Dendritic cell treated with granulocyte-macrophage colony-stimulating factor and Interleukin-4, amounts not matched to agents 40 ng/mL and 50 ng/mL, for 4 days (primary cell): ENCODE measurements at regions of chr3 and their contacts with region 1.

Region 1: GRCh38 chr3:10758304-10759061 is 57.5 kb upstream of the SLC6A11 start:
- H3K4me3 Mint-ChIP-seq: no peak overlapping the region
- H3K27ac Mint-ChIP-seq: no peak overlapping the region
- H3K4me1 Mint-ChIP-seq: no peaks in the 10 kb centered on the region
- H3K27me3 Mint-ChIP-seq: peaks cover 23% of the 10 kb centered on the region

Region 2: GRCh38 chr3:10883478-10884234 is 125.2 kb after region 1 on chr3:
- intact Hi-C with region 1: loop called (anchors 1 kb)
- H3K4me3 Mint-ChIP-seq: no peak overlapping the region
- H3K27ac Mint-ChIP-seq: no peak overlapping the region
- H3K4me1 Mint-ChIP-seq: peaks cover 10% of the 10 kb centered on the region
- H3K27me3 Mint-ChIP-seq: peaks cover 14% of the 10 kb centered on the region

Region 3: DNA sequence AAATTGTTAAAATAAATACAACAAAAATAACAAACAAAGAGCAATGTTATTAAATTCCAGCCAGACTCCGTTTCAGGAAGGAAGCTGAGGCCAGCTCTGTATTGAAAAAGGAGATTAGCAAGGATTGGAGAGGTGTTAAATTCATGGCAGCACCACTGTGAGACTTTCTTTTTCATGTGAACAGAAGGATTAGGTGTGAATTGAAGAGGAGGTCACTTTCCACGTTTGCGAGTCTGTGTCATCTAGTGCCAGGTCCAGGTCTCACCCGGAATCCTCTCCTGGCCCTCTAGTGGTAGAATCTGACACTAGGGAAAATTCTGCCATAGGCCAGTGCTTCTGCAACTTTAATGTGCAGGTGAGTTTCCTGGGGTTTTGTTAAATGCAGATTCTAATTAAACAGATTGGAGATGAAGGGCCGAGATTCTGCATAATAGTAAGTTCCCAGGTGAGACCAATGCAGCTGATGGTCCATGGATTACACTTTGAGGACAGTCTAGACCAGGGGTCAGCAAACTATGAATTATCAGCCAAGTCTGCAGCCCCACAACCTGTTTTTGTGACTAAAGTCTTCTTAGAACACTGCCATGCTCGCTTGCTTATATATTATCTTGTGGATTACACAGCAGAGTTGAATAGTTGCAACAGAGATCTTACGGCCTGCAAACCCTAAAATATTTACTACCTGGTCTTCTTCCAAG is 224.9 kb after region 1 on chr3:
- intact Hi-C with region 1: loop called (anchors 10 kb)
- H3K4me3 Mint-ChIP-seq: no peak overlapping the region
- H3K27ac Mint-ChIP-seq: no peak overlapping the region
- H3K4me1 Mint-ChIP-seq: no peaks in the 10 kb centered on the region
- H3K27me3 Mint-ChIP-seq: peaks cover 28% of the 10 kb centered on the region

Region 4: GRCh38 chr3:11335056-11335608 is 576.6 kb after region 1 on chr3:
- intact Hi-C with region 1: loop called (anchors 10 kb)
- H3K4me3 Mint-ChIP-seq: no peak overlapping the region
- H3K27ac Mint-ChIP-seq: no peak overlapping the region
- H3K4me1 Mint-ChIP-seq: peaks cover 12% of the 10 kb centered on the region
- H3K27me3 Mint-ChIP-seq: no peaks in the 10 kb centered on the region